GM13977 (cell line): ENCODE measurements at regions of chr15 and their contacts with region 1.

Region 1: DNA sequence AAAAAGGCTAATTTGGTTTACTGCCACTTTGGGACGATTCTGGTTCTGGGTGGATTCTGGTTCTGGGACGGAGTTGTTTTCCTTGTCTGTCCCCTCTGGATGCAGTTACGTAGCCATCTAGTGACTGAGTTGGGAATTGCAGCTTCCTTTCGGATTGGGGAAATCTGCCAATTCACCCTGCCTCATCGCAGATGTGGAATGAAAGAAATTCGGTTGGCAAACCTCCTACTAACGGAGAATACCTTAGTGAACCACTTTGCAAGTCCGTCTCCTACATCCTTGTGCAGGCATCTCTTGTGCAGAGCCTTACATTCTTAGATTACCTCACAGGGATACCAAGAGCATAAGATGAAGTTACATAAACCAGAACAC is 31.5 kb upstream of the AP4E1 start:
- DNase-seq: peak; percentile 45
- CTCF ChIP-seq: peak; percentile 89

Region 2: DNA sequence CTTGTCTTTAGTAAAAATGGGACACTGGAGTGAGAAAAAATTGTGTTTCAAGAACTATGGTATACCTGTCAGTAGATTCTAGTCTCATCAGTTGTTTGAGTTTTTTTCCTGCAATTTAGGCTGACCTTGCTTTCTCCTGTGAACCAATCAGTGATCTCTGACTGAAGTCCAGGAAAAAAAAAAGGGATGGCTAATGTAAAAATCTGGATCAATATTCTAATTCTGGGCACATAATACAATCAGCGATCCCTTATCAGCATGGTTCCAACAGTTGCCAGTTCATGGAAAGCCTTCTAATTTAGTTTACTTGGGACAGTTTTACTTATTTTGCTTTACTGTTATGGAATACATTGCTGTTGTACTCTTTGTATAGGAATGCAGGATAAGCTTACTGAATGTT is 207.4 kb before region 1 on chr15:
- in situ Hi-C with region 1: loop called (anchors 10 kb)
- DNase-seq: no peak
- CTCF ChIP-seq: no peak

Region 3: GRCh38 chr15:51270706-51271105 is 393.7 kb after region 1 on chr15:
- in situ Hi-C with region 1: no loop called
- DNase-seq: no peak
- CTCF ChIP-seq: no peak